ENCODE measurements at regions of chr2 and their contacts with region 1.

Region 1: DNA sequence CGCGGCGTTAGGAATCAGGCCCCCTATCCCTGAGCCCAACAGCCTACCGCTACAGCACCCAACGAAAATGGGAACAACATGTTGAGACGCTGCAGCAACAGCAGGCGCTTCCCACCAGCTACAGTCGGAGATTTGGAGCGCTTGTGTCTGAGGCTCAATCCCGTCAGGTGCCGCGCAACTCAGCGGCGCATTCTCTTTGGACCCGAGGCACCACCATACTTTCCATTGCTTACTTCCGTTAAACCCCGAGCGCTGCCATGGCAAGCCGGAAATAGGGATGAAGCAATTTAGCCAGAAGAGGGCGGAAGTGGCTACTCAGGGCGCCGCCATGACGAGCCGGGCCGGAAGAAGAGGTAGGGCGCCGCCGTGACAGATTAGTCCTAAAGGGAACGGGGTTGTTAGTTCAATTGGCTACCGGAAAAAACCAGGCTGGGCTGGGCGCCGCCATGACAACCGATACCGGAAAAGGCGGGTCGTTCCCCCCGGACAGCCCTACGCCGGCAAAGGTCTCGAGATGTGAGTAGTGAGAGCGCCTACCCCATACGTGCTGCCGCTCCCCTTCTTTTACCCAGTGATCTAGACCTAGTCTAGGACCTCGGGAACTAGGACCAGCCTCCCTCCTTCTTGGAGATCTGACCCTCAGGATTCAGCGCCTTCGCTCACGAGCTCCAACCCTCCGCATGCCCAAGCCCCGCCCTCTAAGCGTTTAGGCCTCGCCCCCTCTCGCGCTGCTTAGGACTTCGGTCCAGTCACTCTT is at the start of gene CHCHD5:
- DNase-seq: peak; percentile 96
- ATAC-seq: peak; percentile 83
- H3K4me3 ChIP-seq: peak within 1 kb of the TSS; percentile 70 to 94 (median 75)
- H3K4me3 Mint-ChIP-seq: peak within 1 kb of the TSS; percentile 97
- H3K27ac ChIP-seq: peak within 1 kb of the TSS; percentile 83 to 87
- H3K27ac Mint-ChIP-seq: peak within 1 kb of the TSS; percentile 98
- H3K4me1 ChIP-seq: peaks cover 13 to 25% of the 10 kb centered on the region in 2 donors
- H3K4me1 Mint-ChIP-seq: peaks cover 33% of the 10 kb centered on the region
- H3K27me3 ChIP-seq: no peaks in the 10 kb centered on the region
- H3K27me3 Mint-ChIP-seq: no peaks in the 10 kb centered on the region
- CTCF ChIP-seq: no peak
- total RNA-seq, gene CHCHD5: 19.9 and 22.4 TPM in 2 replicates

Region 2: GRCh38 chr2:111883661-111884591 is 700.4 kb before region 1 on chr2 and contains the start of gene ANAPC1:
- CTCF ChIA-PET with region 1: no interaction called
- POLR2A ChIA-PET with region 1: no interaction called
- intact Hi-C with region 1: loop called (anchors 5 kb)
- DNase-seq: peak; percentile 92
- ATAC-seq: peak; percentile 93
- H3K4me3 ChIP-seq: peak within 1 kb of the TSS; percentile 50 to 94 (median 92)
- H3K4me3 Mint-ChIP-seq: peak within 1 kb of the TSS; percentile 95
- H3K27ac ChIP-seq: peak within 1 kb of the TSS; percentile 84 to 93
- H3K27ac Mint-ChIP-seq: peak within 1 kb of the TSS; percentile 98
- H3K4me1 ChIP-seq: peaks cover 10 to 18% of the 10 kb centered on the region in 2 donors
- H3K4me1 Mint-ChIP-seq: peaks cover 12% of the 10 kb centered on the region
- H3K27me3 ChIP-seq: no peaks in the 10 kb centered on the region
- H3K27me3 Mint-ChIP-seq: no peaks in the 10 kb centered on the region
- CTCF ChIP-seq: no peak
- total RNA-seq, gene ANAPC1: 59.4 and 69.3 TPM in 2 replicates

Region 3: GRCh38 chr2:112054847-112055729 is 529.2 kb before region 1 on chr2 and contains the start of gene TMEM87B:
- CTCF ChIA-PET with region 1: no interaction called
- POLR2A ChIA-PET with region 1: interaction called, 7 read pairs
- intact Hi-C with region 1: loop called (anchors 2 kb)
- DNase-seq: peak; percentile 97
- ATAC-seq: peak; percentile 70
- H3K4me3 ChIP-seq: peak within 1 kb of the TSS; percentile 47 to 94 (median 87)
- H3K4me3 Mint-ChIP-seq: peak within 1 kb of the TSS; percentile 99
- H3K27ac ChIP-seq: peak within 1 kb of the TSS; percentile 80 to 87
- H3K27ac Mint-ChIP-seq: peak within 1 kb of the TSS; percentile 98
- H3K4me1 ChIP-seq: peaks cover 18 to 19% of the 10 kb centered on the region in 2 donors
- H3K4me1 Mint-ChIP-seq: peaks cover 41% of the 10 kb centered on the region
- H3K27me3 ChIP-seq: no peaks in the 10 kb centered on the region
- H3K27me3 Mint-ChIP-seq: no peaks in the 10 kb centered on the region
- CTCF ChIP-seq: no peak
- total RNA-seq, gene TMEM87B: 21.0 and 21.1 TPM in 2 replicates

Region 4: DNA sequence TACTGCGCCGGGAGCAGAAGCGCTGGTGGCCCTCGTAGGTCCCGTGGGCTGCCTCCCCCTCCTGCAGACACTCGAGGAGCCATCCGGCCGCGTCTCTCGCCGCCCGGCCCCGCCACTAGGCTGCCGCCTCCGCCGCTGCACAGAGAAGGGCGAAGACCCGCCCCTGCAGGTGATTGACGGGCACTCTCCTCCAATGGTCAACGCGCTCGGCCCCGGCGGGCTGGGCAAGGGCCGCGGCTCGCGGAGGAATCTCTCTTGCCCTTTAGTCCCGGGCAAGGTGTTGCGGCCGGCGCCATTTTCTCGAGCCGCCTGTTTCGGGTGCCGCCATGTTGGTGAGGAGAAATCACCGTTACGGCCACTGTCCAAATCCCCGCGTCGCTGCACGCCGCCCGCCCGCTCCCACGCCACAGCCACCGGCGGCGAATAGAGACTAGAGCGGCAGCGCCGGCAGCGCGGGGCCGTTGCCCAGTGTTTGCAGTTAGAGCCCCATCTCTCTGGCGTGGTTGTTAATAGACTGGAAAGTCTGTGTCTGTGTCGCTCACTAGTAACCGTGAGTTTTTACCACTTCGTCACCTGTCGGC is 308.9 kb before region 1 on chr2 and contains the start of gene ZC3H6:
- CTCF ChIA-PET with region 1: no interaction called
- POLR2A ChIA-PET with region 1: no interaction called
- intact Hi-C with region 1: loop called (anchors 2 kb)
- DNase-seq: peak; percentile 100
- ATAC-seq: peak; percentile 89
- H3K4me3 ChIP-seq: peak within 1 kb of the TSS; percentile 85 to 99 (median 97)
- H3K4me3 Mint-ChIP-seq: peak within 1 kb of the TSS; percentile 96
- H3K27ac ChIP-seq: peak within 1 kb of the TSS; percentile 99 to 100
- H3K27ac Mint-ChIP-seq: peak within 1 kb of the TSS; percentile 100
- H3K4me1 ChIP-seq: peaks cover 4 to 10% of the 10 kb centered on the region in 2 donors
- H3K4me1 Mint-ChIP-seq: peaks cover 15% of the 10 kb centered on the region
- H3K27me3 ChIP-seq: no peaks in the 10 kb centered on the region
- H3K27me3 Mint-ChIP-seq: no peaks in the 10 kb centered on the region
- CTCF ChIP-seq: no peak
- total RNA-seq, gene ZC3H6: 16.6 and 21.9 TPM in 2 replicates

Region 5: GRCh38 chr2:112454586-112454985 is 129.7 kb before region 1 on chr2:
- CTCF ChIA-PET with region 1: no interaction called
- POLR2A ChIA-PET with region 1: no interaction called
- intact Hi-C with region 1: no loop called
- DNase-seq: no peak
- ATAC-seq: no peak
- H3K4me3 ChIP-seq: no peak overlapping the region
- H3K4me3 Mint-ChIP-seq: no peak overlapping the region
- H3K27ac ChIP-seq: no peak overlapping the region
- H3K27ac Mint-ChIP-seq: no peak overlapping the region
- H3K4me1 ChIP-seq: no peaks in the 10 kb centered on the region
- H3K4me1 Mint-ChIP-seq: no peaks in the 10 kb centered on the region
- H3K27me3 ChIP-seq: peaks cover 0 to 7% (median 2%) of the 10 kb centered on the region in 4 experiments
- H3K27me3 Mint-ChIP-seq: peaks cover 12% of the 10 kb centered on the region
- CTCF ChIP-seq: no peak

Region 6: GRCh38 chr2:112542123-112542983 is 42.0 kb before region 1 on chr2 and contains the start of gene POLR1B:
- CTCF ChIA-PET with region 1: interaction called, 4 read pairs
- POLR2A ChIA-PET with region 1: no interaction called
- intact Hi-C with region 1: loop called (anchors 1 kb)
- DNase-seq: peak; percentile 88
- ATAC-seq: peak; percentile 80
- H3K4me3 ChIP-seq: peak within 1 kb of the TSS; percentile 65 to 99 (median 94)
- H3K4me3 Mint-ChIP-seq: no peak within 1 kb of the TSS
- H3K27ac ChIP-seq: peak within 1 kb of the TSS; percentile 85 to 94
- H3K27ac Mint-ChIP-seq: no peak within 1 kb of the TSS
- H3K4me1 ChIP-seq: peaks cover 15 to 18% of the 10 kb centered on the region in 2 donors
- H3K4me1 Mint-ChIP-seq: peaks cover 15% of the 10 kb centered on the region
- H3K27me3 ChIP-seq: no peaks in the 10 kb centered on the region
- H3K27me3 Mint-ChIP-seq: no peaks in the 10 kb centered on the region
- CTCF ChIP-seq: no peak
- total RNA-seq, gene POLR1B: 32.5 and 34.2 TPM in 2 replicates

Region 7: GRCh38 chr2:112645310-112646101 is 61.2 kb after region 1 on chr2 and contains the start of gene SLC20A1:
- CTCF ChIA-PET with region 1: interaction called, 4 read pairs
- POLR2A ChIA-PET with region 1: interaction called, 4 read pairs
- intact Hi-C with region 1: loop called (anchors 1 kb)
- DNase-seq: peak; percentile 98
- ATAC-seq: peak; percentile 93
- H3K4me3 ChIP-seq: peak within 1 kb of the TSS; percentile 65 to 98 (median 90)
- H3K4me3 Mint-ChIP-seq: peak within 1 kb of the TSS; percentile 94
- H3K27ac ChIP-seq: peak within 1 kb of the TSS; percentile 90 to 96
- H3K27ac Mint-ChIP-seq: peak within 1 kb of the TSS; percentile 90
- H3K4me1 ChIP-seq: peaks cover 15 to 20% of the 10 kb centered on the region in 2 donors
- H3K4me1 Mint-ChIP-seq: peaks cover 26% of the 10 kb centered on the region
- H3K27me3 ChIP-seq: no peaks in the 10 kb centered on the region
- H3K27me3 Mint-ChIP-seq: no peaks in the 10 kb centered on the region
- CTCF ChIP-seq: peak; percentile 69
- total RNA-seq, gene SLC20A1: 54.9 and 57.1 TPM in 2 replicates

Region 8: GRCh38 chr2:112726497-112727190 is 142.3 kb after region 1 on chr2:
- CTCF ChIA-PET with region 1: interaction called, 7 read pairs
- POLR2A ChIA-PET with region 1: no interaction called
- intact Hi-C with region 1: loop called (anchors 1 kb)
- DNase-seq: peak; percentile 94
- ATAC-seq: peak; percentile 91
- H3K4me3 ChIP-seq: no peak overlapping the region
- H3K4me3 Mint-ChIP-seq: peak overlapping the region; percentile 80
- H3K27ac ChIP-seq: no peak overlapping the region
- H3K27ac Mint-ChIP-seq: peak overlapping the region; percentile 88
- H3K4me1 ChIP-seq: peaks cover 8 to 25% of the 10 kb centered on the region in 2 donors
- H3K4me1 Mint-ChIP-seq: peaks cover 17% of the 10 kb centered on the region
- H3K27me3 ChIP-seq: no peaks in the 10 kb centered on the region
- H3K27me3 Mint-ChIP-seq: no peaks in the 10 kb centered on the region
- CTCF ChIP-seq: peak; percentile 94